ENCODE measurements at regions of chr22 and their contacts with region 1.

Region 1: DNA sequence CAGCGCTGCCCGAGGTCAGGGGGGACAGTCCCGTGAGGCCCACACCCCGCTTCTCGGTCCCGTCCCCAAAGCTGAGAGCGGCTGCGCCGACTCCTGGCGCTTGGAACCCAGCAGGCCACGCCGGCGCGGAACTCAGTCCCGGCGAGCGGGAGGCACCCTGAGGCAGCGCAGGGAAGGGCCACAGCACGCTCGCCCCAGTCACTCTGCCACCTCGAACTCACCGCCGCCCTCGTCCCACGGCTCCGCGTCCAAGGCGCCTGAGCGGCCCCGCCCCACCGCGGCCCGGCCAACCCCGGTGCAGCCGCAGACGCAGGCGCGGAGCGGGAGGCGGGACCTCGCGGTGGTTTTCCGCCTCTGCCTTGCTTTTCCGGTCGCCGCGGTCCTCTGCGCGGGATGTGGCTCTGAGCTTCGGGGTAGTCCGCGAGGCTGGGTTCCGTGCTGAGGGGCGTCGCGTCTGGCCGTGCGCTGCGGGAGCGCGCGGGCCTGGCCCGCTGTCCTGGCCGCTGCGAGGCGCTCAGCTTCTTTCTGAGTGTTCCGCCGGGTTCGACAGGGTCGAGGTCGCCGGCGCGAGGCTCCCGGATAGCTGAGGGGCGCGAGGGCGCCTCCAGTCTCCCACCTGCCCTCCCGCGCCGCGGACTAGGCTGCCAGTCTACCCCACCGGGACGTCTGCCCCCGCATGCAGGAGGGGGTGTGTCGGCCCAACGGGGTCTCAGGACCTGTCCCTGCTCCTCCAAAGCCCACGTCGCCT is at the start of gene CDPF1:
- DNase-seq: peak; percentile 88 to 93 (median 92)
- H3K4me3 ChIP-seq: peak within 1 kb of the TSS; percentile 45 to 85 (median 69)
- H3K27ac ChIP-seq: peak within 1 kb of the TSS in 1 of 2 experiments; percentile 66
- H3K4me1 ChIP-seq: peaks cover 0 to 19% (median 14%) of the 10 kb centered on the region in 4 experiments
- H3K27me3 ChIP-seq: no peaks in the 10 kb centered on the region

Region 2: GRCh38 chr22:46219636-46220035 is 30.6 kb before region 1 on chr22:
- CTCF ChIA-PET with region 1: no interaction called
- POLR2A ChIA-PET with region 1: no interaction called
- DNase-seq: peak in 2 of 3 donors; percentile 20 to 32
- H3K4me3 ChIP-seq: no peak overlapping the region
- H3K27ac ChIP-seq: no peak overlapping the region
- H3K4me1 ChIP-seq: no peaks in the 10 kb centered on the region
- H3K27me3 ChIP-seq: no peaks in the 10 kb centered on the region

Region 3: GRCh38 chr22:46262449-46263232 is 12.4 kb after region 1 on chr22:
- CTCF ChIA-PET with region 1: interaction called, 10 read pairs
- POLR2A ChIA-PET with region 1: interaction called, 3 read pairs
- DNase-seq: peak; percentile 78 to 87 (median 81)
- H3K4me3 ChIP-seq: peak overlapping the region in 2 of 7 experiments; percentile 33 to 36
- H3K27ac ChIP-seq: no peak overlapping the region
- H3K4me1 ChIP-seq: peaks cover 4 to 27% (median 8%) of the 10 kb centered on the region in 4 experiments
- H3K27me3 ChIP-seq: peaks cover 8 to 40% (median 18%) of the 10 kb centered on the region in 5 experiments